Heart left ventricle (tissue), 16 donors: ENCODE measurements at regions of chr6 and their contacts with region 1.

Region 1: DNA sequence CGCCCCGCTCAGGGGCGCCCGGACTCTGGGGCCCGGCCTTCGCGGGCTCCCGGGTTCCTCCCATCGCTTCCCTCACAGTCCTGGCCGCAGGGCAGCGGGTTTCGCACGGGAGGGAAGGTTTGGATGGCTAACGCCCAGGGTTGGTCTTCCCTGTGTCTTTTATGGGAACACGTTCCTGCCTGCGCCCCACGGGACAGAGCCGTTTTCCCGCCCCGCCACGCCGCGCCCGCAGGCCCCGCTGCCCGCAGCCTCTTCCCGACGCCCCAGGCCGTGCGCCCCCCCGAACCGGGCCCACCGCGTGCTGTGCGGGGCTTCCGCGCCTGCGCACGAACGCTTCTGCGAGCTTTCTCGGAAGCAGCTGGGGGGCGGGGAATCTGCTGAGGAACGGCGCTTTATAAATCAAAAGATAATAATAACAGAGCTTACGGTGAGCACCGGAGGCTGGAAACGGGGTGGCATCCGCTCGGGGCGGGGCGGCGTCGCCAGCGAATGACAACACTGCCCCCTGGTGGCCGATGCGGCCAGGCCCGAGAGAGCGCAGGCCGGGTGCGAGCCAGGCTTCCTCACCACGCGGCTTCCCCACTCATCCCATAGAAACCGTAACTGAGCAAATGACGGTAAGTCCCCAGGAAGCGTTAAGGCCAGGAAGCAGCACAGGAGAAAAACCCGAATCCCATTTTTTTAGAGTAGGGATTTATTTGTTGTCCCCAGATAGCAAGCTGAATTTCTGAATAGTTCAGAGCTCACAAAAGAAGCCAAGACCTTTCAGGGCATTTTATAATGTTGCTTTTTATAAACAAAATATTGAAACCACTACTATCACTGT is 116.4 kb downstream of the MYLK4 start:
- DNase-seq: peak; percentile 86 to 94 (median 89)
- ATAC-seq: peak; percentile 85 to 94 (median 91)
- H3K4me3 ChIP-seq: peak overlapping the region in 11 of 12 donors; percentile 32 to 70 (median 57)
- H3K27ac ChIP-seq: peak overlapping the region; percentile 20 to 86 (median 69)
- H3K4me1 ChIP-seq: peaks cover 0 to 34% (median 15%) of the 10 kb centered on the region in 12 donors
- H3K27me3 ChIP-seq: no peaks in the 10 kb centered on the region
- CTCF ChIP-seq: peak; percentile 97 to 100 (median 99)
- POLR2A ChIP-seq: no peak

Region 2: GRCh38 chr6:1604158-1605030 is 1030.0 kb before region 1 on chr6:
- intact Hi-C with region 1: loop called in 5 of 10 experiments (anchors 2 to 5 kb)
- DNase-seq: peak in 4 of 5 donors; percentile 67 to 89 (median 75)
- ATAC-seq: peak; percentile 73 to 95 (median 88)
- H3K4me3 ChIP-seq: peak overlapping the region; percentile 12 to 66 (median 54)
- H3K27ac ChIP-seq: no peak overlapping the region
- H3K4me1 ChIP-seq: peaks cover 0 to 35% (median 13%) of the 10 kb centered on the region in 12 donors
- H3K27me3 ChIP-seq: peaks cover 33 to 94% (median 70%) of the 10 kb centered on the region in 9 donors
- CTCF ChIP-seq: peak; percentile 88 to 100 (median 98)
- POLR2A ChIP-seq: no peak

Region 3: GRCh38 chr6:2127484-2127911 is 506.9 kb before region 1 on chr6:
- intact Hi-C with region 1: loop called in 1 of 10 experiments (anchors 10 kb)
- DNase-seq: peak; percentile 51 to 76 (median 61)
- ATAC-seq: peak; percentile 88 to 93 (median 92)
- H3K4me3 ChIP-seq: peak overlapping the region in 7 of 12 donors; percentile 19 to 39 (median 30)
- H3K27ac ChIP-seq: peak overlapping the region; percentile 28 to 76 (median 58)
- H3K4me1 ChIP-seq: peaks cover 0 to 27% (median 11%) of the 10 kb centered on the region in 12 donors
- H3K27me3 ChIP-seq: no peaks in the 10 kb centered on the region
- CTCF ChIP-seq: no peak
- POLR2A ChIP-seq: peak in 1 of 2 donors; percentile 18

Region 4: DNA sequence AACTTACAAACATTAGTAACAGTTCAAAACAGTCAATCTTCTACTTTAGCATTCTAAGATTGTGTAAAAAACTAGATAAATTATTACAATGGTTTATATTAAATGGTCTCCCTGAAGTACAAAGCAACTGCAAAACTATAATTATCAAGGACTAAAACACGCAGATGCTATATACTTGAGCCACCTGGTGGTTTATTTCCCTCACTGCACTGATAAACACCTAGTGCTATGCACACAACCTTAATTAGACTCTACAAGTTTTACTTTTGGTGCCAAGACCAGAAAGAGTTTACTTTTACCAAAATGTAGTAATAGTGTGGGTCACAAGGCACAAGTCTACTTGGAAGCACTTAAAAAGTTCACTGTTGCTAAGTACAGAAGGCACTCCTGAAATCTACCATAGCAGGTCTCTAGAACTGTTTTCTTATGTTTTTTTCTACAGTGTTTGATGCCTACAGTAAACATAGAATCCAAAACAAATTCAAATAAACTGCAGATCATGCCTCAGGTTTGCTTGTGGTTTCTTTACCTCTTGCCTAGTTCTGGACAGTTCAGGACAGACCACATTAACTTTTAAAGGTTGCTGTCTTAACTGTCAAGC is 438.2 kb before region 1 on chr6:
- intact Hi-C with region 1: loop called in 3 of 10 experiments (anchors 5 to 10 kb)
- DNase-seq: peak in 1 of 5 donors; percentile 16
- ATAC-seq: peak in 3 of 4 donors; percentile 74 to 80 (median 77)
- H3K4me3 ChIP-seq: no peak overlapping the region
- H3K27ac ChIP-seq: no peak overlapping the region
- H3K4me1 ChIP-seq: peaks cover 0 to 21% (median 7%) of the 10 kb centered on the region in 12 donors
- H3K27me3 ChIP-seq: no peaks in the 10 kb centered on the region
- CTCF ChIP-seq: peak; percentile 69 to 90 (median 78)
- POLR2A ChIP-seq: no peak

Region 5: DNA sequence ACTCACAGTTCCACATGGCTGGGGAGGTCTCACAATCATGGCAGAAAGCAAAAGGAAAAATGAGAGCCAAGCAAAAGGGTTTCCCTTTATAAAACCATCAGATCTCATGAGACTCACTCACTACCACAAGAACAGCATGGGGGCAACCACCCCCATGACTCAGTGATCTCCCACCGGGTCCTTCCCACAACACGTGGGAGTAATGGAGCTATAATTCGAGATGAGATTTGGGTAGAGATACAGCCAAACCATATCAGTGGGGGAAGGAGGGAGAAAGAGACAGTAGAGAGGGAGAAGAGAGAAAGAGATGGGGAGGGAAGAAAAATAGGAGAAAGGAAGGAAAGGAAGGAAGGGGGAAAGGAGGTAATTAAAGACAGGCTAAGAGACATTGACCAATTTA is 419.0 kb before region 1 on chr6:
- intact Hi-C with region 1: loop called in 1 of 10 experiments (anchors 10 kb)
- DNase-seq: no peak
- ATAC-seq: no peak
- H3K4me3 ChIP-seq: no peak overlapping the region
- H3K27ac ChIP-seq: no peak overlapping the region
- H3K4me1 ChIP-seq: peaks cover 0 to 4% (median 0%) of the 10 kb centered on the region in 12 donors
- H3K27me3 ChIP-seq: no peaks in the 10 kb centered on the region
- CTCF ChIP-seq: no peak
- POLR2A ChIP-seq: no peak

Region 6: DNA sequence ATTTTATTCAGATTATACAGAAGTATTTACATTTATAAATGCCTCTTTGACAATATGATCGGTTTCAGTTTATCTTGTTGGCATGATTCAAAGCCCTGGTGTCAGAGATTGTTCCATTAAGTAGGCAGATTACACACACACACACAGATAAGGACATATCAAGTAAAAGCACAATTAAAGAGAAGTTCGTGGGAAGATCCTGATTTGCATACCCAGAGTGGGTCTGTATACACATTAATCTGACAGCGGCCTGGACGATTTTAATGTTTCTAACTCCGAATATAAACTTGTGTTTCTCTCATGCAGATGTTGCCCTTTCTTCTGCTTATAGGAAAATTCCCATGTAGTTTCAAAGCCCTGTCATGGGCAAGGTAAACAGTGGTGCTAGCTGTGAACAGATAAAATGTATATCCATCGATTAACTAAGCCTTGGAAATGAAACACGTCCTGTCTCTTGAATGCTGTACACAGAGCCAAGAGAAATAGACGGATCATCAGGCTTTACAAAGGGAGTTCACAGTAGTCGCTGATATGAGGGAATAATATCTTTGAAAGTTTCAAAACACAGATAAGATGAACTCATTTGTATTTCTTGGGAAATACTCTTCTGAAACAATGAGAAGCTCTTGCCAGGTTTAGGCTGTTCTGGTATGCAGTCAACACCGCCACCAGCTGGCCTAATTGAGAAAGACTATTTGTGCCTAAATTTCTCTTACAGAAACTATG is 280.8 kb before region 1 on chr6:
- intact Hi-C with region 1: loop called in 4 of 10 experiments (anchors 5 to 10 kb)
- DNase-seq: peak in 4 of 5 donors; percentile 44 to 59 (median 49)
- ATAC-seq: peak in 3 of 4 donors; percentile 75 to 87 (median 84)
- H3K4me3 ChIP-seq: peak overlapping the region in 1 of 12 donors; percentile 17
- H3K27ac ChIP-seq: peak overlapping the region in 1 of 12 donors; percentile 30
- H3K4me1 ChIP-seq: peaks cover 0 to 11% (median 5%) of the 10 kb centered on the region in 12 donors
- H3K27me3 ChIP-seq: no peaks in the 10 kb centered on the region
- CTCF ChIP-seq: peak; percentile 64 to 89 (median 80)
- POLR2A ChIP-seq: no peak

Region 7: GRCh38 chr6:2478200-2478599 is 156.2 kb before region 1 on chr6:
- intact Hi-C with region 1: loop called in 1 of 10 experiments (anchors 10 kb)
- DNase-seq: peak in 2 of 5 donors; percentile 16 to 44
- ATAC-seq: peak; percentile 29 to 64 (median 38)
- H3K4me3 ChIP-seq: no peak overlapping the region
- H3K27ac ChIP-seq: peak overlapping the region in 8 of 12 donors; percentile 15 to 81 (median 48)
- H3K4me1 ChIP-seq: peaks cover 0 to 37% (median 15%) of the 10 kb centered on the region in 12 donors
- H3K27me3 ChIP-seq: no peaks in the 10 kb centered on the region
- CTCF ChIP-seq: no peak
- POLR2A ChIP-seq: no peak